ENCODE measurements at regions of chr14 and their contacts with region 1.

Region 1: GRCh38 chr14:38255673-38256532 is at the start of gene CLEC14A:
- DNase-seq: peak; percentile 83 to 93 (median 91)
- ATAC-seq: peak; percentile 91 to 94
- H3K4me3 ChIP-seq: peak within 1 kb of the TSS; percentile 60
- H3K27ac ChIP-seq: peak within 1 kb of the TSS; percentile 83
- H3K4me1 ChIP-seq: no peaks in the 10 kb centered on the region
- H3K27me3 ChIP-seq: no peaks in the 10 kb centered on the region
- total RNA-seq, gene CLEC14A: 30.1 to 48.5 (median 41.8) TPM

Region 2: GRCh38 chr14:38290601-38291190 is 34.8 kb after region 1 on chr14:
- intact Hi-C with region 1: no loop called
- DNase-seq: no peak
- ATAC-seq: peak; percentile 84 to 97
- H3K4me3 ChIP-seq: no peak overlapping the region
- H3K27ac ChIP-seq: no peak overlapping the region
- H3K4me1 ChIP-seq: no peaks in the 10 kb centered on the region
- H3K27me3 ChIP-seq: no peaks in the 10 kb centered on the region

Region 3: GRCh38 chr14:38366374-38366773 is 110.5 kb after region 1 on chr14:
- intact Hi-C with region 1: loop called in 1 of 4 experiments (anchors 10 kb)
- DNase-seq: no peak
- ATAC-seq: peak in 1 of 2 donors; percentile 76
- H3K4me3 ChIP-seq: no peak overlapping the region
- H3K27ac ChIP-seq: no peak overlapping the region
- H3K4me1 ChIP-seq: no peaks in the 10 kb centered on the region
- H3K27me3 ChIP-seq: no peaks in the 10 kb centered on the region

Measured in right cardiac atrium (tissue), 5 donors.